Dendritic cell treated with granulocyte-macrophage colony-stimulating factor and Interleukin-4, amounts not matched to agents 40 ng/mL and 50 ng/mL, for 4 days (primary cell): ENCODE measurements at regions of chr3 and their contacts with region 1.

Region 1: GRCh38 chr3:48898383-48899234 is at the start of gene SLC25A20:
- H3K4me3 Mint-ChIP-seq: peak within 1 kb of the TSS; percentile 96
- H3K27ac Mint-ChIP-seq: peak within 1 kb of the TSS; percentile 87
- H3K4me1 Mint-ChIP-seq: peaks cover 39% of the 10 kb centered on the region
- H3K27me3 Mint-ChIP-seq: no peaks in the 10 kb centered on the region

Region 2: GRCh38 chr3:48595526-48596121 is 303.0 kb before region 1 on chr3:
- intact Hi-C with region 1: no loop called
- H3K4me3 Mint-ChIP-seq: peak overlapping the region; percentile 33
- H3K27ac Mint-ChIP-seq: peak overlapping the region; percentile 6
- H3K4me1 Mint-ChIP-seq: peaks cover 34% of the 10 kb centered on the region
- H3K27me3 Mint-ChIP-seq: peaks cover 46% of the 10 kb centered on the region

Region 3: DNA sequence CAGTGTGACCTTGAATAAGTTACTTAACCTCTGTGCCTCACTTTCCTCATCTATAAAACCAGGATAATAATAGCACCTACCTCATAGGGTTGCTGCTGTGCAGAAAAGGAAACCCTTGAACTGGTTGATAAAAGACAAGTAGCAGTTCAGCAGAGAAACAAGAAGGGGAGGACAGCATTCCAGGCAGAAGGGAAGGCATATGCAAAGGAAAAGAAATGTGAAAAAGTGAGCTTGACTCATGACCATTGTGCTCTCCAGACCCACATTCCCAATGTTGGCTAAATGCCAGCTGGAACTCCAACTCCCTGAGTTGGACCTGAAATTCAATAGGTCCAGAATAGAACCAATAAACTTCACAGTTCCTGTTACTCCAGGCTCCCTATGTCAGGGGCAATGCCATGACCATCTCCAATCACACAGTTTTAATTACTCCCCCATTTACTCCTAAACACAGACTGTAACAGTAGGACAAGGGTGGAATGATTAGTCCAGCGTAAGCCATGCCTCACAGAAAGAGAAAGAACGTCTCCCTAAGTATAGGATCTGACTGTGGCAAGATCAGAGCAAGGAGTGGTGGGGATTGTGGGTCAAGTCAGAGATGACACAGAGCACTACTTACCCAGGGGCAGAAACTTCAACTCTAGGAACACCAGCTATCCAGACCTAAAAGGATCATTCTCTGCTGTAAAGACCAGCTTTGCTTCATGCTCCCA is 77.8 kb before region 1 on chr3:
- intact Hi-C with region 1: no loop called
- H3K4me3 Mint-ChIP-seq: no peak overlapping the region
- H3K27ac Mint-ChIP-seq: no peak overlapping the region
- H3K4me1 Mint-ChIP-seq: peaks cover 25% of the 10 kb centered on the region
- H3K27me3 Mint-ChIP-seq: no peaks in the 10 kb centered on the region

Region 4: DNA sequence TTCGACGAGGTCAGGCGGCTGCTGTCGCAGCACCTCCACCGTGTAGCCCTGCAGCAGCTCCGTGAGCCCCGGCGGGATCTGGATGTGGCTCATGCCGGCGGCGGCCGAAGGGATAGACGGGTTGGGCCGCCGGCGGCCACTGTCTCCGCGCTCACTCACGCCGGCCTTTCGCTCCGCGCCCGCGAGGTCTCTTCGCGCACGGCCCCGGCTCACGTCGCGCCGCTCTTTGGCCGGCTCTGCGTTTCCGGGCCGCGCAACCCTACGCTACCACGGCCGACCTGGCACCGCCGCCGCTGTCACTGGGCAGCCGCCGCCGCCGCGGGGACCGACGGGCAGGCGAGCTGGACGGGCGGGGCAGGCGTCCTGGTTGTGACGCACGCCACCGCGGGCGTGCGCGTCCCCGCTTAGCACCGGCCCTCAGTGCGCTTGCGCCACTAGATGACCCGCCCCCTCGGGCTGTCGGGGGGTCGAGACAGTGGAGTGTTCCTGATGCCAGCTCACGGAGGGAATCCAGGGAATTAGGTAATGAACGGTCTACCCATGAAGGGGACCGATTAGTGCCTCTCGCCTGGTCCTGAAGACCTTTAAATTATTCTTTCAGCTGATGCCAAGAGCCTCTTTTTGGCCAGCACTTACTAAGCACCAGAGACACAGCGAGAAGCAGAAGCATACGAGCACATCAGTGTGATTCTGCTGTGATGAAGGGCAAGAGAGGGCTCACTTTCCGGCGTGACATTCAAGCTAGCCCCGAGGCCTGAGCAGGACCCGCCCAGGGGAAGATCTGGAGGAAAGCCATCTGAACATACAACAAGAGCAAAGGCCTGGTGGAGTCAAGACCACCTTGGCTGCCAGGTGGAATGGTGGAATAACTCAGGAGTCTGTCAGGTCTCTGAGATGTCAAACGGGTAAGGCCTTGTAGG is 50.8 kb before region 1 on chr3 and contains the start of gene PRKAR2A:
- intact Hi-C with region 1: loop called (anchors 10 kb)
- H3K4me3 Mint-ChIP-seq: peak within 1 kb of the TSS; percentile 83
- H3K27ac Mint-ChIP-seq: peak within 1 kb of the TSS; percentile 96
- H3K4me1 Mint-ChIP-seq: peaks cover 34% of the 10 kb centered on the region
- H3K27me3 Mint-ChIP-seq: no peaks in the 10 kb centered on the region

Region 5: DNA sequence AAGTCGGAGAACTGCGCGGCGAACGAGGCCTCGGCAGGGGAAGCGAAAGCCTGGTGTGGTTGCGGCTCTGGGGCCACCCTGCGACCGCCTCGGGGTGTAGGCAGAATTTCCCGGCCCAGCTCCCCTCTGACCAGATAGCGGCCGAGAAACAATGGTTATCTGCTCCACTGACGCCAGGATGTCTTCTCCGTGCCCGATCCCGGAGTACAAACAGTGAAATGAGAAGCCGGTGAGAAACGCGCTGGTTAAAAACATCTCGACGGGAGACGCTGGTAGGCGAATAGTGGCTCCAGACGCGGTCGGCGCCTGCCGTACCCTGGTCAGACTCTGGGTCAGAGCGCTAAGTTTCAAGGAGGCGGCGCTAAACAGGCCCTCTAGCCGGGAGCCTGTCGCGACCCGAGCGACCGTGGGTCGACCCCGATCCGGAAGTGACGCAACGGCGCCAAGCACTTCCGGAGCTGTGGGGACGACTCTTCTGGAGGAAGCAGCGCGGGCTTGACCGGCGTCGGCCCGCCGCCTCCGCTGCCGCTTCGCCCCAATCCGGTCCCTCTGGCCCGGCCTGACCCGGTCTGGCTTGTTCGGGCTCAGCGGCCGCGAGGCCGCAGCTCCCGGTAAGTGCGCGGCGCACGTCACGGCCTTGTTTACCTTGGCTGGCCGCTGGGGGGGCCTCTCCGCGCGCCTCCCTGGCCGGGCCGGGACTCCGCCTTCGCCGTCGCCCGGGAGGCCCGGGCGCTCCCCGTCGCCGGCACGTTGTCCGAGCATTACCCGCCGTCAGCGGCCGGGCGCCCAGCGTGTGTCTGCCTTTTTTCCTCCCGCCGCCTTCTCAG is 20.0 kb after region 1 on chr3 and contains the start of gene ARIH2:
- intact Hi-C with region 1: loop called (anchors 2 kb)
- H3K4me3 Mint-ChIP-seq: peak within 1 kb of the TSS; percentile 95
- H3K27ac Mint-ChIP-seq: peak within 1 kb of the TSS; percentile 97
- H3K4me1 Mint-ChIP-seq: peaks cover 21% of the 10 kb centered on the region
- H3K27me3 Mint-ChIP-seq: no peaks in the 10 kb centered on the region

Region 6: GRCh38 chr3:49165771-49166751 is 267.5 kb after region 1 on chr3 and contains the start of gene CCDC71:
- intact Hi-C with region 1: no loop called
- H3K4me3 Mint-ChIP-seq: peak within 1 kb of the TSS; percentile 88
- H3K27ac Mint-ChIP-seq: peak within 1 kb of the TSS; percentile 95
- H3K4me1 Mint-ChIP-seq: peaks cover 44% of the 10 kb centered on the region
- H3K27me3 Mint-ChIP-seq: peaks cover 5% of the 10 kb centered on the region